HAP-1 (cell line): ENCODE measurements at regions of chr11 and their contacts with region 1.

Region 1: DNA sequence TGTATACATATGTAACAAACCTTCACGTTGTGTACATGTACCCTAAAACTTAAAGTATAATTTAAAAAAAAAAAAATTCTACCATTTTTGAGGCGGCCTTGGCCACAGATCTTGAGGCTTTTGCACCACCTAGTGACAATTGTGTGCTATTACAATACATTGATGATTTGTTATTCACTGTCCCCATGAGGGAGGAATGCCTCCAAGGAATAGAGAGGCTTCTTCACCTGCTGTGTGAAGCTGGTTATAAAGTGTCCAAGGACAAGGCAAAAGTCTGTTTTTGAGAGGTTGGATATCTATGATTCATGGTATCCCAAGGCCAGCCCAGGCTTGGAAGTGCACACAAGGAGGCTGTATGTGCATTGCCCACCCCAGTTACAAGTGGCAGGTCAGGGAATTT is 30.7 kb downstream of the SLC22A25 start:
- DNase-seq: peak; percentile 32 to 40
- H3K4me3 ChIP-seq: no peak overlapping the region
- H3K4me1 ChIP-seq: no peaks in the 10 kb centered on the region
- H3K27me3 ChIP-seq: 0 out of 2 replicates have a peak, but pooled peaks cover 2% of the 10 kb centered on the region

Region 2: GRCh38 chr11:62370743-62371440 is 841.9 kb before region 1 on chr11:
- in situ Hi-C with region 1: no loop called
- DNase-seq: no peak
- H3K4me3 ChIP-seq: no peak overlapping the region
- H3K4me1 ChIP-seq: no peaks in the 10 kb centered on the region
- H3K27me3 ChIP-seq: no peaks in the 10 kb centered on the region

Region 3: GRCh38 chr11:63042596-63042995 is 170.1 kb before region 1 on chr11:
- in situ Hi-C with region 1: loop called (anchors 25 kb)
- DNase-seq: no peak
- H3K4me3 ChIP-seq: no peak overlapping the region
- H3K4me1 ChIP-seq: no peaks in the 10 kb centered on the region
- H3K27me3 ChIP-seq: no peaks in the 10 kb centered on the region